ENCODE measurements at regions of chr2 and their contacts with region 1.

Region 1: GRCh38 chr2:190849774-190850173 is 30.8 kb upstream of the GLS start:
- DNase-seq: no peak
- H3K4me3 ChIP-seq: no peak overlapping the region
- CTCF ChIP-seq: no peak

Region 2: GRCh38 chr2:190781604-190782198 is 68.1 kb before region 1 on chr2:
- CTCF ChIA-PET with region 1: interaction called, 10 read pairs
- POLR2A ChIA-PET with region 1: no interaction called
- DNase-seq: peak; percentile 12
- H3K4me3 ChIP-seq: no peak overlapping the region
- CTCF ChIP-seq: peak; percentile 46

Region 3: GRCh38 chr2:190812506-190813294 is 37.1 kb before region 1 on chr2:
- CTCF ChIA-PET with region 1: interaction called, 14 read pairs
- POLR2A ChIA-PET with region 1: interaction called, 4 read pairs
- DNase-seq: no peak
- H3K4me3 ChIP-seq: no peak overlapping the region
- CTCF ChIP-seq: no peak

Region 4: DNA sequence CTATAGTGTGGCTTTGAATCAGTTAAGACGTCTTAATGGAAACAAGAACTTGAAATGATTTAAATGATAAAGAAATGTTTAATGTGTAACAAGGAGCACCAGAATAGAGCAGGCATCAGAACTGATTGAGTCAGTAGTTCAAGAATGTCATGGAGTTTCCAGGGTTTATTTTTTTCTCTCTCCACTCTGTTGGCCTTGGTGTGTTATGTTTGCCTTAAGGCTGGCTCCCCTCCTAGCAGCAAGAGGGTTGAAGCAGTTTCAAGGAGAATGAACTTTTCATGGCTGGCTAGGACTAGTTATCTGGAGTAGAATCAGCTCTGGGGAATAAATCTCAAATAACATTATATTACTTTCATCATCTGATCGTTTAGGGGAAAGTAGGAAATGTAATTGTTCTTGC is 17.4 kb after region 1 on chr2:
- CTCF ChIA-PET with region 1: interaction called, 17 read pairs
- POLR2A ChIA-PET with region 1: interaction called, 3 read pairs
- DNase-seq: peak; percentile 66
- H3K4me3 ChIP-seq: no peak overlapping the region
- CTCF ChIP-seq: no peak

Region 5: GRCh38 chr2:190887089-190887488 is 37.3 kb after region 1 on chr2:
- CTCF ChIA-PET with region 1: interaction called, 14 read pairs
- POLR2A ChIA-PET with region 1: interaction called, 12 read pairs
- DNase-seq: no peak
- H3K4me3 ChIP-seq: no peak overlapping the region
- CTCF ChIP-seq: no peak

Region 6: GRCh38 chr2:191202881-191203397 is 353.2 kb after region 1 on chr2:
- CTCF ChIA-PET with region 1: no interaction called
- POLR2A ChIA-PET with region 1: no interaction called
- DNase-seq: no peak
- H3K4me3 ChIP-seq: no peak overlapping the region
- CTCF ChIP-seq: no peak

Region 7: GRCh38 chr2:192072778-192073177 is 1223.0 kb after region 1 on chr2:
- CTCF ChIA-PET with region 1: no interaction called
- POLR2A ChIA-PET with region 1: no interaction called
- DNase-seq: no peak
- H3K4me3 ChIP-seq: no peak overlapping the region
- CTCF ChIP-seq: no peak

Measured in AG04449 (cell line).